GM10248 (cell line): ENCODE measurements at regions of chr13 and their contacts with region 1.

Region 1: DNA sequence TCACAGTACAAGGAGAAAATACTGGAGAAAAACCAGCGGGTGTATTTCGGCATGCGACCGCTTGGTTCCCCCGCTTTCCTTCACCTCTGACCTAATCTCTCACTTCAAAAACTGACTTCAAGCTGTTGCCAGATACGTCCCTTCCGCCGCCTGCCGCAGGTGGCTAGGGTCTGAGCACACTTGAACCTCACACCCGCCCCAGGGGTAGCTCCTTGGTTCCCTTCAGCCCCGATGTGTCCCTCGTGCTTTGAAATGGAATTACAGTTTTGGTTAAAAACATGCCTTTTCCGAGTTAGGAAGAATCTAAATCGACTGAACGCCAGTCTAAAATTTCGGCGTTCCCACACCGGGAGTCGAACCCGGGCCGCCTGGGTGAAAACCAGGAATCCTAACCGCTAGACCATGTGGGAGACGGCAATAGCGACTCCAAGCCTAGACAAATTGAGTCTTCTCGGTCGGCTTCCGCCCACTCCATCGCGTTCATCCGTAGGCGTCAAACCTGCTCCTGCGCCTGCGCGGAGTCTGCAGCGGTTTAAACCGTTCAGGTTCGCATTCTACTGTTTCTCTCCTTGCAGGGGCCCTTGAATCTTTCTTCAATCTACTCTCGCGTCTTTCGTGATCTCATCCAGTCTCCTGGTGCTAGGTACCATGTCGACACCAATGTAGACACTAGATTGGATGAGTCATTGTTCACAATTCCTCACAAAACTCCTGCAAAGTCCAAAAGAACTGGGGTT is 71.5 kb downstream of the NUFIP1 start:
- DNase-seq: peak; percentile 87
- CTCF ChIP-seq: peak; percentile 4

Region 2: GRCh38 chr13:44899967-44900366 is 17.8 kb before region 1 on chr13:
- CTCF ChIA-PET with region 1: no interaction called
- POLR2A ChIA-PET with region 1: no interaction called
- DNase-seq: no peak
- CTCF ChIP-seq: no peak

Region 3: GRCh38 chr13:44929692-44930091 is 11.9 kb after region 1 on chr13:
- CTCF ChIA-PET with region 1: interaction called, 19 read pairs
- POLR2A ChIA-PET with region 1: interaction called, 3 read pairs
- DNase-seq: no peak
- CTCF ChIP-seq: no peak

Region 4: DNA sequence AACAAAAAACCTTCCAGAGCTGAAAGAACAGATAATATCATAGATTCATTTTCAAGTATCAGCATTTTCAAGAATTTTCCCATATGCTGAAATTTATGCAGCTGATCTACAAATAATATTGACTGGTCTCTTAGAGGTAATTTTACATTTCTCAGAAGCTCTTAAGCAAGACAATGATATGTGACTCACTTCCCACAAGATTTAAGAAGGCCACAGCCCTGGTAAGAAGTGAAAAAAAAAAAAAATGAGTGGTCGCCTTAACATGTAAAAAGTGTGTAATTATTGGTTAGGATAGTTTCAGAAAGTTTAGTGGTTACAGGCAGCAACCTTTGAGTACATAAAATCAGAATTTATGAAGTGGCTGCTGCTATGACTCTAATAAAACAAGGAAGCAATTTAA is 17.0 kb after region 1 on chr13:
- CTCF ChIA-PET with region 1: interaction called, 19 read pairs
- POLR2A ChIA-PET with region 1: no interaction called
- DNase-seq: no peak
- CTCF ChIP-seq: no peak